ENCODE measurements at regions of chr20 and their contacts with region 1.

Region 1: DNA sequence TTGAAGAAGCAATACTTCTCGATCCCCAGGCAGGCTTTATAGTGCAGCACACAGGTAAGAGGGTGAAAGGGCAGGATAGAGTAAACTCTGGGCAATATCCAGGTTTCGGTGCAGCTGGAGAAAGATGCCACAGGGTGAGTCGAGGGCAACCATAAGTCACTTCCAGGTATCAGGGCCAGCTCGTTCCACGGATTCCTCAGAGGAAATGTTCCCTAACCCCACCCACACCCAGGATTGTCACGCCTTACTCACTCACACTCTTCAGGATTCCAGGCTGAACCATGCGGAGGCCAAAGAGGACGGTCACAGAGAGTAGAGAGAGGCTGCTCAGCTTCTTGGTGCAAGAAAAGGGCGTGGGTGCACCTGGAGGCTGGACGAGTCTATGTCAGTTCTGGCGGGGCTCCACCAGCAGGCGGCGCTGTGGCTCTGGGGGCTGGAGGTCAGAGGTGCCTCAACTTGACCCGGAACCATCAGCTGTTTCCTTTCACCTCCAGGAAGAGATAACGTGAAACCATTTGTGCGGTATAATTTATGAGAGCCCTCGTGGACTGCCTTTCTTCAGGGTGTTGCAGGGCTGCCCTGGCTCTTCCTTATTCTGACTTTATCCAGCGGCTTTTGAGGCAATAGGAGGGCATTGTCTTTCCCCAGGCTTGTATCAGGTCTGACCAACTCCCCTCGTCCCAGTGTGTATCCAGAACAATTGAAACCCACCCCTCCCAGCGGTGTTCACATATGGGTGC is 14.5 kb upstream of the WFDC12 start:
- DNase-seq: peak; percentile 21
- ATAC-seq: peak; percentile 99
- H3K4me3 ChIP-seq: no peak overlapping the region
- H3K27ac ChIP-seq: no peak overlapping the region
- H3K4me1 ChIP-seq: peaks cover 0 to 7% of the 10 kb centered on the region in 2 experiments; a peak in 2 of 4 replicates
- H3K27me3 ChIP-seq: no peaks in the 10 kb centered on the region
- CTCF ChIP-seq: peak; percentile 80 to 97 (median 95)
- POLR2A ChIP-seq: peak; percentile 31
- RAD21 ChIP-seq: peak; percentile 75

Region 2: DNA sequence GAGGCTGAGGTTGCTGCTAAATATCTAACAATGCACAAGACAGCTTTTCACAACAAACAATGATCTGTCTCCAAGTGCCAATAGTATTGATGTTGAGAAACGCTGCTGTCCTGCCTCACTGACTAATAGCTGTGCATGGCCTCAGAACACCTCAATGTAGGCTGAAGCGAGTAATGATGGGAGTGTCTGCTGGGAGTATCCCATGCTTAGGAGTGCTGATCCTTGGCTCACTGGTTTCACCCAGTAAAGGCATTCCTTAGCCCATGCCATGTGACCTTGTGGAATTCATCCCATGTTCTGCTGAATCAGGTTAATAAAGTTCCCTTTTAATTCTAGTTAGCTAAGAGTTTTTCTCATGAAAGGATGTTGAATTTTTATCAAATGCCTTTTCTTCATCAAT is 10.7 kb before region 1 on chr20:
- CTCF ChIA-PET with region 1: interaction called, 20 read pairs
- POLR2A ChIA-PET with region 1: no interaction called
- RAD21 ChIA-PET with region 1: no interaction called
- intact Hi-C with region 1: no loop called
- DNase-seq: no peak
- ATAC-seq: no peak; the same call in 1 of the 2 replicates
- H3K4me3 ChIP-seq: no peak overlapping the region
- H3K27ac ChIP-seq: no peak overlapping the region
- H3K4me1 ChIP-seq: no peaks in the 10 kb centered on the region; a peak in 1 of 4 replicates
- H3K27me3 ChIP-seq: no peaks in the 10 kb centered on the region
- CTCF ChIP-seq: no peak
- POLR2A ChIP-seq: no peak
- RAD21 ChIP-seq: no peak

Region 3: GRCh38 chr20:45293041-45294002 is 154.6 kb after region 1 on chr20:
- CTCF ChIA-PET with region 1: interaction called, 30 read pairs
- POLR2A ChIA-PET with region 1: no interaction called
- RAD21 ChIA-PET with region 1: interaction called, 3 to 9 read pairs
- intact Hi-C with region 1: loop called (anchors 2 kb)
- DNase-seq: peak; percentile 26
- ATAC-seq: peak; percentile 91
- H3K4me3 ChIP-seq: peak overlapping the region; percentile 32 to 59
- H3K27ac ChIP-seq: peak overlapping the region; percentile 23; the same call in 1 of the 2 replicates
- H3K4me1 ChIP-seq: peaks cover 0 to 12% of the 10 kb centered on the region in 2 experiments; a peak in 2 of 4 replicates
- H3K27me3 ChIP-seq: no peaks in the 10 kb centered on the region
- CTCF ChIP-seq: peak; percentile 40 to 97 (median 94); a peak in 5 of 6 replicates
- POLR2A ChIP-seq: no peak
- RAD21 ChIP-seq: no peak

Region 4: DNA sequence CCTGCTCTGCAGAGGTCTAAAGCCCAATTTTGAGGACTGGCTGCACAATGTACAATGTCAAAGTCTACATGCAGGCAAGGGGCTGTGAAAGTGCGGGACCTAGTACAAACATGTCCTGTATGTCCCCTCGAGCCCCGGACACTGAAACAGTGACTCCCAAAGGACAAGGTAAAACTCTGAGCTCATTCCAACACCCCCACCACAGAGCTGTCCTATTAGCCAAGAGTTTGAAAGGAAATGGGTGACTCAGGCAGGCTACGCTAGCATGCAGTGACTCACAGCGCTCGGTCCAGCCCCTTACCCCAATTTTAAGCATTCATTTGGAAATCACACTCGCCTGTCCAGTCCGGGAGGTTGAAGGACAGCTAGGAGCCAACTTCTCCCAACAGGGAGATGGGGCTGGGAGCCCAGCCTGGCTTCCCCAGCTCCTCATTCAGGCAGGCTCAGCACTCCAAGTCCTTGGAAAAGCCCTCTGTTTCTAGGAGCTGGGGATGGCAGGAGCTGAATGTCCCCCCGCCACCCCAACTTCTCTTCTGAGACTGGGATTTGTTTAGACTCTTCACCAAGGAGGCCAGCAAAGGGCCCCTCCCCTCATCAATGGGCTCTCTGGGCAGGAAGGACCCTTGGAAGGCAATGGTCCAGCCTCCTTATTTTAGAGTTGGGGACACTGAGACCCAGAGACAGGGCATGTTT is 205.6 kb after region 1 on chr20:
- CTCF ChIA-PET with region 1: no interaction called
- POLR2A ChIA-PET with region 1: no interaction called
- RAD21 ChIA-PET with region 1: no interaction called
- intact Hi-C with region 1: no loop called
- DNase-seq: peak; percentile 72
- ATAC-seq: peak; percentile 62
- H3K4me3 ChIP-seq: peak overlapping the region; percentile 82 to 84
- H3K27ac ChIP-seq: peak overlapping the region; percentile 82
- H3K4me1 ChIP-seq: peaks cover 83 to 93% of the 10 kb centered on the region in 2 experiments
- H3K27me3 ChIP-seq: no peaks in the 10 kb centered on the region
- CTCF ChIP-seq: no peak
- POLR2A ChIP-seq: no peak
- RAD21 ChIP-seq: no peak